WTC11 (cell line): ENCODE measurements at regions of chr4 and their contacts with region 1.

Region 1: DNA sequence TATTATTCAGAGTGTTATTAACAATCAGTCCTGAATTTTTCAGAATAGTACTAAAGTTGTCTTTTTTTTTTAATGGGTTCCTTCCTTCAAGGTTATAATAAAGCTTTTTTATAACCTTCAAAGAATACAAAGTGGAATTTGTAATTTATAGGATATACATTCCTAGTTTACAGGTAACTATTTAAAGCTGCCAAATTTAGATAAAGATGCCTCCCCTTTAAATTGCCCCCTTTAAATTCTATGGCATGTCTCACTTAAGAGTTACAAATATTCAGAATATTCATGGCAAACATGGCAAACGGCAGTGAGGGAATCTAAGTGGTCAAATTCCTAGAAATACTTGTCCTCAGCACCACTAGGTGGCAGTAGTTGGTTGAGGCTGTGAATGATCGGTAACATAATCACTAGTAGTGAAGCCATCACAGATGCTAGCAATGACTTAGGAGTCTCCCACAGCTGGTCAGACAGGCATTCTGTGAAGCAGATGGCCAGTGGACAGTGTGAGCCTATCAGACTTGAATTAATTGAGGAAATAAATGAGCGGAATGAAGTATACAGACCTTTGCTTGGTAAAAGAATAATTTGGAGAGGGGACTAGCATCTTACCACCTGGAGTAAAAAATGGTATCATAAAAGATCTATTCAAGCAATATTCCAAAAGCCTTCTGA is 86.4 kb downstream of the CBR4 start:
- DNase-seq: peak; percentile 52
- ATAC-seq: peak; percentile 52
- H3K4me3 Mint-ChIP-seq: no peak overlapping the region
- H3K27ac Mint-ChIP-seq: no peak overlapping the region; the same call in none of the 2 replicates
- H3K4me1 Mint-ChIP-seq: peaks cover 48% of the 10 kb centered on the region
- H3K27me3 Mint-ChIP-seq: no peaks in the 10 kb centered on the region
- CTCF ChIP-seq: peak; percentile 70

Region 2: DNA sequence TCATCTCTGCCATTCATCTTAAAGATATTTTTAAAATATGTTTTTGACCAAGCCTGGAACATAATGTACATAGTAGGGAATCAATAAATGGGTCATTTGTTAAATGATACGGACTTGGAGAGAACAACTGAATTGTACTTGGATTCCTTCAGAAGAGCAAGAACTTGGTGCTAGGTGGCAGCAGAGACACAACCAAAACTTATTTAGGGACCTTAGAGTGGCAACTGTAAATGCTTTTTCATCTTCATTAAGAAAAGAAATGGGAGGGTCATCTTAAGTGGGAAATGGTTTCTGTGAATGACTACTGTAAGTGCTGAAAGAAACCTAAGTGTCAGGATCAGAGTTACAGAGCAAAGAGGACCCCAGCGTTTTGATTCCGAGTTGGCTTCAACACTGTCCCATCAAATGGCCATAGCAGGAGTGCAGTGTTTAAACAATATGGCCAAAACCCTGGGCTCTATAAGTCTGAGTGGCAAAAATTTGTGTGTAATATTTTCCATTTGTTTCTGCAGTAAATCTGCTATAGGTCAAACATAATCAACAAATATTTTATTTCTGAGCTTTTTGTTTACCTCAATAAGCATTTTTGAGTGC is 213.2 kb before region 1 on chr4:
- CTCF ChIA-PET with region 1: interaction called, 43 read pairs
- POLR2A ChIA-PET with region 1: no interaction called
- DNase-seq: no peak
- ATAC-seq: peak; percentile 75
- H3K4me3 Mint-ChIP-seq: no peak overlapping the region
- H3K27ac Mint-ChIP-seq: no peak overlapping the region
- H3K4me1 Mint-ChIP-seq: peaks cover 5% of the 10 kb centered on the region; the same call in 1 of the 2 replicates
- H3K27me3 Mint-ChIP-seq: 0 out of 2 replicates have a peak, but pooled peaks cover 3% of the 10 kb centered on the region
- CTCF ChIP-seq: no peak

Region 3: DNA sequence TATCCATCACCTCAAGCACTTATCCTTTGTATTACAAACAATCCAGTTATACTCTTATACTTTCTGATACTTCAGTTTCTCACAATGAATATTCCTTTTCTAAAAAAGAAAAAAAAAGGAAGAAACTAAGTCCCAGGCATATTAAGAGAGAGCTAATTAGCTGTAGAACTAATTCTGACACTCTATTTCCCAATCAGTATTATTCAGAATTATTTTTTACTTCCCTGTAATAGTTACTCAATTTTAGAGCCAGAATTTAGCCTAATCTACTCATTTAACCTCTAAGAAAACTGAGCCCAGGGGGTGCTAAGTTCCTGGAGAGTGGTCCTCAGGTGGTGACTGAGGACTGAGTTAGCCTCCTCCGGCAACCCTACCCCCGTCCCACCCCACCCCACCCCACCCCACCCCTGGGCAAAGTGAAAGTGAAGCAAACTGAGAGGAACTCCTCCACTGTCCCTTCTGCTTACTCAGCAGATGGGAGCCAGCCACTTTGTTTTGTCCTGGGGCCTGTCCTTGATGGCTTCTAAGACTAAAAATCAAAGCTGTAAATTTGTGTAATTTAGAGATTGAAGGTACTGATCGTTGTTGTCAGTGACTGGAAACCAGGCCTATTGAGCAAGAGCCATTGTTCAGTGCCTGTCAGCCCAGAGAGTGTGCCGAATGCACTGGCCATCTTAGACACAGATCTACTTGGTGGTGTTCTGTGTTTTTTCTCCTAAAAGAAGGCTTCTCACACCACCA is 75.7 kb before region 1 on chr4:
- CTCF ChIA-PET with region 1: interaction called, 14 read pairs
- POLR2A ChIA-PET with region 1: no interaction called
- DNase-seq: no peak
- ATAC-seq: peak; percentile 10; the same call in 1 of the 2 replicates
- H3K4me3 Mint-ChIP-seq: no peak overlapping the region
- H3K27ac Mint-ChIP-seq: no peak overlapping the region
- H3K4me1 Mint-ChIP-seq: peaks cover 76% of the 10 kb centered on the region
- H3K27me3 Mint-ChIP-seq: no peaks in the 10 kb centered on the region
- CTCF ChIP-seq: no peak

Region 4: DNA sequence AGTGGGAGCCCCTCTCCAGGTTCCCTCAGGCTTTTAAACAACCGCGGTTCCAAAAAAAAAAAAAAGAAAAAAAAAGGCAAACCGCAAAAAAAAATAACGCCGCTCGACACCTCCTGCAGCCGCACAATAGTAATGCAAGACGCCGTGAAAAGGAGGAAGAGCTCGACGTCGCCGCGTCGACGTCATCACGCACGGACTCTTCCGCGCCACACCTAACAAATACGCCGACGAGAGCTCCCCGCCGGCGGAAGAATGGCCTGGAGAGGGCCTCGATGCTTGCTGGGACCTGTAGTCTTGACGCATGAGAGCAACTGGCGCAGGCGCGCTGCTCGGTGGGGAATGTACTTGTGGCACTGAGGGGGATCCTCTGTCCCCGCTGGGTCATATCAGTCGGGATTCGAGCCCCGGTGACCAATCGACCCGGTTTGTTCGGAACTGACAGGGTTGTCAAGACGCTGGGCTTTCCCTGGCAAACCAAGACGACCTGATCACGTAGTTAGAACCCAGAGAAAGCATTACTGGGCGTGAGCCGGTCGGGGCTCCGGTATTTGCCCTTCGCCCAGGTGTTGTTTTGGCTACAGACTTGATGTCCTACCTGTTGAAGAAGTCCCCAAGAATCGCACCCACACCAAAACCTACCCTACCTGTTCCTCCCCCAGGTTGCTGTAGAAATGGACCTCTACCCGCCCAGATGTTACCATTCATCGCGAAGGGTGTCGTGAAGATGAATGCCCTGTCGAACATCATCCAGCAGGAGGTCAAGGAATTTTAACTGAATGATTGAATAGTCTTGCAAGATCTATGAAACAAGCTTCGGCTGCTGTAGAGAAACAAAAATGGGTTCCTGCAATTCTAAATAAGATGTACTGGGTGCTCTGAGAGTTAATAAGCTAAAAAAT is 86.7 kb after region 1 on chr4 and contains the start of gene CBR4:
- CTCF ChIA-PET with region 1: interaction called, 8 read pairs
- POLR2A ChIA-PET with region 1: interaction called, 10 read pairs
- DNase-seq: peak; percentile 95
- ATAC-seq: peak; percentile 99
- H3K4me3 Mint-ChIP-seq: peak within 1 kb of the TSS; percentile 96
- H3K27ac Mint-ChIP-seq: peak within 1 kb of the TSS; percentile 97
- H3K4me1 Mint-ChIP-seq: peaks cover 39% of the 10 kb centered on the region
- H3K27me3 Mint-ChIP-seq: no peaks in the 10 kb centered on the region
- CTCF ChIP-seq: no peak
- total RNA-seq, gene CBR4: 48.1 to 52.6 TPM (median 50.8 TPM) in 3 replicates